CD4-positive, alpha-beta memory T cell (primary cell): ENCODE measurements at regions of chr12 and their contacts with region 1.

Region 1: GRCh38 chr12:70242695-70243509 is at the start of gene CNOT2:
- DNase-seq: peak; percentile 88 to 94 (median 90)
- H3K4me3 ChIP-seq: peak within 1 kb of the TSS; percentile 88 to 93
- H3K4me3 Mint-ChIP-seq: peak within 1 kb of the TSS; percentile 96 to 100 (median 99)
- H3K27ac ChIP-seq: peak within 1 kb of the TSS; percentile 99
- H3K27ac Mint-ChIP-seq: peak within 1 kb of the TSS; percentile 98 to 100 (median 100)
- H3K4me1 ChIP-seq: peaks cover 61% of the 10 kb centered on the region
- H3K4me1 Mint-ChIP-seq: peaks cover 41 to 75% (median 54%) of the 10 kb centered on the region in 4 donors
- H3K27me3 ChIP-seq: no peaks in the 10 kb centered on the region
- H3K27me3 Mint-ChIP-seq: peaks cover 0 to 2% of the 10 kb centered on the region in 2 donors
- total RNA-seq, gene CNOT2: 120 to 121 TPM

Region 2: DNA sequence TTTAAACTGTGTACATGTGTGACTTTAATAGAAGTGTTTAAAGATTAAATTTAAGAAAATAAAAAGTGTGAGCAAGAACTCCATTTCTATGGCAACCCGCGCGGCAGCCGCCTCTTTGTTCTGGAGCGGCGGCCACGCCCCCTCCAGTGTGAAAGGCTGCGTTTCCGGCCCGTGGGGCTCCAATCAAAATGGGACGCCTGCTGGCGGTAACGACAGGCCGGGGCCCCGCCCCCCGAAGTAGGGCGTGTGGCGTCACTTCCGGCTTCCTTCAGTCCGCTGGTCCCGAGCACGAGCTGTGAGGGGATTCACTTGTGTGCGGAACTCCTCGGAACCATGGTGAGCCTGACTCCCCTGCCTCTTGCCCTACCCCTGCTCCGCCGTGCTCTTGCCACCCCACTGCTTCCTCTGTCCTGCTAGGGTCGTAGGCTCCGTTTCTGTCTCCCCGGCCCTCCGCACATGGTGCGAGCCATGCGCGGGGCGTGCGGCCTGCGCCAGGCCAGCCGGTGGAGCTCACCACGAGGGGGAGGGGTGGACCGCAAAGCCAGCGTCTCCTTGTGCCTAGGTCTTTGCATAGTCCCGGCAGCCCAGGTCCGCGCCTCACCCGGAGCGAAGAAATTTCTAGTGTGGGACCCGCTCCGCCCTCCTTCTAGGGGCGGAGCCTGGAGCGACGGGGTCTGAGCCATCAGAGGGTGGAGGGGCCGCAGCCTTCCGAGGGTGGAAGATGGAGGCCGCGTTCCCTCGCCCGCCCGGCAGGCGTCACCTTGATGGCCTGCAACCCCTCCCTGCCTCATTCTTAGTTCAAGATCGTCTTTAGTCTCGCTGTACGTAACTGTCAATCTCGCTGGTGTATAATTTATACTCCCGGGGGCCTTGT is 657.5 kb before region 1 on chr12 and contains the start of gene CCT2:
- CTCF ChIA-PET with region 1: no interaction called
- POLR2A ChIA-PET with region 1: no interaction called
- intact Hi-C with region 1: loop called (anchors 10 kb)
- DNase-seq: peak; percentile 91 to 96 (median 96)
- H3K4me3 ChIP-seq: peak within 1 kb of the TSS; percentile 90 to 93
- H3K4me3 Mint-ChIP-seq: peak within 1 kb of the TSS; percentile 94 to 97 (median 95)
- H3K27ac ChIP-seq: peak within 1 kb of the TSS; percentile 95
- H3K27ac Mint-ChIP-seq: peak within 1 kb of the TSS; percentile 96 to 99 (median 98)
- H3K4me1 ChIP-seq: peaks cover 16% of the 10 kb centered on the region
- H3K4me1 Mint-ChIP-seq: peaks cover 5 to 19% (median 10%) of the 10 kb centered on the region in 4 donors
- H3K27me3 ChIP-seq: no peaks in the 10 kb centered on the region
- H3K27me3 Mint-ChIP-seq: no peaks in the 10 kb centered on the region
- total RNA-seq, gene CCT2: 92.6 to 104 TPM

Region 3: GRCh38 chr12:70267550-70267949 is 24.6 kb after region 1 on chr12:
- CTCF ChIA-PET with region 1: no interaction called
- POLR2A ChIA-PET with region 1: no interaction called
- intact Hi-C with region 1: no loop called
- DNase-seq: no peak
- H3K4me3 ChIP-seq: no peak overlapping the region
- H3K4me3 Mint-ChIP-seq: peak overlapping the region in 2 of 8 donors; percentile 42 to 49
- H3K27ac ChIP-seq: no peak overlapping the region
- H3K27ac Mint-ChIP-seq: no peak overlapping the region
- H3K4me1 ChIP-seq: peaks cover 74% of the 10 kb centered on the region
- H3K4me1 Mint-ChIP-seq: peaks cover 55 to 88% (median 70%) of the 10 kb centered on the region in 4 donors
- H3K27me3 ChIP-seq: no peaks in the 10 kb centered on the region
- H3K27me3 Mint-ChIP-seq: no peaks in the 10 kb centered on the region

Region 4: GRCh38 chr12:70277973-70278372 is 35.1 kb after region 1 on chr12:
- CTCF ChIA-PET with region 1: interaction called, 3 read pairs
- POLR2A ChIA-PET with region 1: no interaction called
- intact Hi-C with region 1: loop called (anchors 2 kb)
- DNase-seq: no peak
- H3K4me3 ChIP-seq: no peak overlapping the region
- H3K4me3 Mint-ChIP-seq: peak overlapping the region in 2 of 8 donors; percentile 3 to 13
- H3K27ac ChIP-seq: no peak overlapping the region
- H3K27ac Mint-ChIP-seq: peak overlapping the region in 3 of 7 donors; percentile 19 to 69 (median 45)
- H3K4me1 ChIP-seq: peaks cover 29% of the 10 kb centered on the region
- H3K4me1 Mint-ChIP-seq: peaks cover 44 to 71% (median 57%) of the 10 kb centered on the region in 4 donors
- H3K27me3 ChIP-seq: no peaks in the 10 kb centered on the region
- H3K27me3 Mint-ChIP-seq: no peaks in the 10 kb centered on the region

Region 5: GRCh38 chr12:70365648-70366518 is 123.0 kb after region 1 on chr12 and contains the start of gene KCNMB4:
- CTCF ChIA-PET with region 1: interaction called, 3 read pairs
- POLR2A ChIA-PET with region 1: interaction called, 24 read pairs
- intact Hi-C with region 1: loop called (anchors 1 kb)
- DNase-seq: peak; percentile 59 to 78 (median 63)
- H3K4me3 ChIP-seq: peak within 1 kb of the TSS; percentile 11 to 78
- H3K4me3 Mint-ChIP-seq: peak within 1 kb of the TSS; percentile 92 to 99 (median 94)
- H3K27ac ChIP-seq: peak within 1 kb of the TSS; percentile 3
- H3K27ac Mint-ChIP-seq: peak within 1 kb of the TSS in 6 of 7 donors; percentile 65 to 89 (median 85)
- H3K4me1 ChIP-seq: peaks cover 14% of the 10 kb centered on the region
- H3K4me1 Mint-ChIP-seq: peaks cover 8 to 22% (median 18%) of the 10 kb centered on the region in 4 donors
- H3K27me3 ChIP-seq: peaks cover 8% of the 10 kb centered on the region
- H3K27me3 Mint-ChIP-seq: peaks cover 2 to 4% of the 10 kb centered on the region in 2 donors
- total RNA-seq, gene KCNMB4: 0.67 to 1.1 TPM

Region 6: DNA sequence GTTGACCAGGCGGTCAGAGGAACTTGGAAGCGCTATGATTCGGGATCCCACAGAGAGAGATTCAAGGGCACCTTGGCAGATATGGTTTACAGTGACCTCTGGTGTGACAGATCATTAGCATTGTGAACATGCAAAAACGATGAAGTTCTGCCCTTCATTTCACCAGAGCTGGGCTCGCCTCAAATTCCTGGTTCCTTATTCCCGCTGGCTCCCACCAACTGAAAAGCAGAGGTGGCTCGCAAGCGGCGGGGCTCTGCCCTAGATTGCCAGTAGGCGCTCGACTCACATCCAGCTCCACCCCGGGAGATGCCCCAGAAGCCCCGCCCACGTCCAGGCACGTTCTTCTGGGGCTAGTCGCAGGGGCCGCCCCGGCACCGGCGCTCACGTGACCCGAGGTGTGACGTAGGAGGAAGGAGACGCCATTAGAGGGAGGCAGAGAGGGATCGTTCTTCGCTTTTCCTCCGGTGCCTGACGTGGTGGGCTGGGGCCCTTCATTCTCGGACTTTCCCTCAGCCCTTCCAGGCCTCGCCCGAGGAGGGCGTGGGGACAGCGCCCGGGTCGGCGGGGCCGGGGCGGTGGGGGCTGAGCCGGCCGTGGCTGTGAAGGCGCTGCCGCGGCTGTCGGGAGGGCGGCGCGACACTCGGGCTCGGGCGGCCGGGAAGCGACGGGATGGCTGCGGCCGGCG is 1511.7 kb after region 1 on chr12 and contains the start of gene RAB21:
- CTCF ChIA-PET with region 1: no interaction called
- POLR2A ChIA-PET with region 1: interaction called, 3 read pairs
- intact Hi-C with region 1: loop called (anchors 5 kb)
- DNase-seq: peak; percentile 97 to 99 (median 98)
- H3K4me3 ChIP-seq: peak within 1 kb of the TSS; percentile 66 to 82
- H3K4me3 Mint-ChIP-seq: peak within 1 kb of the TSS; percentile 93 to 97 (median 95)
- H3K27ac ChIP-seq: peak within 1 kb of the TSS; percentile 86
- H3K27ac Mint-ChIP-seq: peak within 1 kb of the TSS; percentile 97 to 99 (median 97)
- H3K4me1 ChIP-seq: peaks cover 36% of the 10 kb centered on the region
- H3K4me1 Mint-ChIP-seq: peaks cover 24 to 51% (median 39%) of the 10 kb centered on the region in 4 donors
- H3K27me3 ChIP-seq: peaks cover 3% of the 10 kb centered on the region
- H3K27me3 Mint-ChIP-seq: peaks cover 3 to 17% of the 10 kb centered on the region in 2 donors
- total RNA-seq, gene RAB21: 73.6 to 77.2 TPM